ENCODE measurements at regions of chr6 and their contacts with region 1.

Region 1: GRCh38 chr6:156776840-156777576 is at the start of gene ARID1B:
- DNase-seq: peak; percentile 81
- H3K4me3 ChIP-seq: peak within 1 kb of the TSS; percentile 82 to 97 (median 90)
- H3K27ac ChIP-seq: peak within 1 kb of the TSS; percentile 85
- H3K4me1 ChIP-seq: peaks cover 33% of the 10 kb centered on the region
- H3K27me3 ChIP-seq: no peaks in the 10 kb centered on the region
- CTCF ChIP-seq: no peak
- POLR2A ChIP-seq: peak; percentile 46
- total RNA-seq, gene ARID1B: 81.3 and 89.5 TPM in 2 replicates

Region 2: DNA sequence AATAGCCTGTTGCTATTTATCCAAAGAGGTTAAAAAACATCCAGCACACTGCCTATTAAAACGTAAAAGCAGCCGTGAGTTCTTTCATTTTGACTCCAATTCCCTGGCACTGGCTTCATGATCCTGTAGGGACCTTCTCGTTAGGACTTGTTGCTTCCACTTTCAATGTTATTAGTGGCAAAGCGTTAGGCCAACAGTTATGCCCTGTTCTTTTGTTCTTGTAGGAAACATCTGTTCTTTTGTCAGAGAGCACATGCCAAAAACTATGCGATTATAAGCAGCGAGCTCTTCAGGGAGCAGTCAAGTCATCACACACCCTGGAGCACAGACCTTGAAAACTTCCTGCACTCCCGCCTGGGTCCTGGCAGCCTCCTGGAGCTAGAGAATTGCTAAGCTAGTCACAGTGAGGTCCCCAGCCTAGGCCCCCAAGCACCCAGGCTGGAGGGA is 609.4 kb before region 1 on chr6:
- CTCF ChIA-PET with region 1: no interaction called
- POLR2A ChIA-PET with region 1: no interaction called
- dilution Hi-C with region 1: no loop called
- intact Hi-C with region 1: loop called (anchors 10 kb)
- DNase-seq: peak; percentile 98
- H3K4me3 ChIP-seq: peak overlapping the region in 1 of 3 experiments; percentile 18
- H3K27ac ChIP-seq: peak overlapping the region; percentile 68
- H3K4me1 ChIP-seq: peaks cover 17% of the 10 kb centered on the region
- H3K27me3 ChIP-seq: no peaks in the 10 kb centered on the region
- CTCF ChIP-seq: no peak
- POLR2A ChIP-seq: peak; percentile 24

Region 3: DNA sequence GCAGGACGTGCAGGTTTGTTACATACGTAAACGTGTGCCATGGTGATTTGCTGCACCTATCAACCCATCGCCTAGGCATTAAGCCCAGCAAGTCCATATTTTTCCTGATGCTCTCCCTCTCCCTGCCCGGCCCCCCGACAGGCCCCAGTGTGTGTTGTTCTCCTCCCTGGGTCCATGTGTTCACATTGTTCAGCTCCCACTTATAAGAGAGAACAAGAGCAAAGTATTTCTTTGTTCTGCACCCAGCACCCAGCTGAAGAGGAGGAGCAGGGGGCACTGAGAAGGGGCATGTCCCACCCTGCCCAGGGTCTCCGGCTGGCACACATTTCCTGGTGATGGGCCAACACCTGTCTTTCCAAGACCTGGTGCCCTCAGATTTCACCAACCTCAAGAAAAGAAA is 250.9 kb before region 1 on chr6:
- CTCF ChIA-PET with region 1: no interaction called
- POLR2A ChIA-PET with region 1: no interaction called
- dilution Hi-C with region 1: no loop called
- intact Hi-C with region 1: no loop called
- DNase-seq: no peak
- H3K4me3 ChIP-seq: no peak overlapping the region
- H3K27ac ChIP-seq: no peak overlapping the region
- H3K4me1 ChIP-seq: no peaks in the 10 kb centered on the region
- H3K27me3 ChIP-seq: no peaks in the 10 kb centered on the region
- CTCF ChIP-seq: no peak
- POLR2A ChIP-seq: no peak

Region 4: GRCh38 chr6:156686995-156687788 is 89.8 kb before region 1 on chr6:
- CTCF ChIA-PET with region 1: interaction called, 4 read pairs
- POLR2A ChIA-PET with region 1: no interaction called
- dilution Hi-C with region 1: no loop called
- intact Hi-C with region 1: loop called (anchors 1 kb)
- DNase-seq: peak; percentile 85
- H3K4me3 ChIP-seq: peak overlapping the region; percentile 82 to 91 (median 86)
- H3K27ac ChIP-seq: peak overlapping the region; percentile 98
- H3K4me1 ChIP-seq: peaks cover 11% of the 10 kb centered on the region
- H3K27me3 ChIP-seq: peaks cover 5 to 18% of the 10 kb centered on the region in 2 experiments
- CTCF ChIP-seq: no peak
- POLR2A ChIP-seq: peak; percentile 68

Region 5: DNA sequence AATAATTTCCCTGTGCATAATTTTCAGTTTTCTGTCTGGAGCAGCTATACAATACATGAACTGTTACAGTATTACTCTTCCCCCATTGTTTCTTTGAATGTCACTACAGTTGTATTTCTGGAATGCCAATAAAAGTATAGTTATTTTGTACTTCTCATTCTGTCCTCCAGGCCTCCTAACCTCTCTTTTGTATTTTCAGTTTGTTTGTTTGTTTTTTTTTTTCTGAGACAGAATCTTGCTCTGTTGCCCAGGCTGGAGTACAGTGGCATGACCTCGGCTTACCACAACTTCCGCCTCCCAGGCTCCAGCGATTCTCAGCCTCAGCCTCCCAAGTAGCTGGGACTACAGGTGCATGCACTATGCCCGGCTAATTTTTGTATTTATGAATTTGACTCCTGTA is 16.6 kb before region 1 on chr6:
- CTCF ChIA-PET with region 1: no interaction called
- POLR2A ChIA-PET with region 1: no interaction called
- dilution Hi-C with region 1: no loop called
- intact Hi-C with region 1: no loop called
- DNase-seq: no peak
- H3K4me3 ChIP-seq: no peak overlapping the region
- H3K27ac ChIP-seq: no peak overlapping the region
- H3K4me1 ChIP-seq: no peaks in the 10 kb centered on the region
- H3K27me3 ChIP-seq: peaks cover 0 to 4% of the 10 kb centered on the region in 2 experiments
- CTCF ChIP-seq: no peak
- POLR2A ChIP-seq: no peak

Region 6: GRCh38 chr6:156848533-156848932 is 71.5 kb after region 1 on chr6:
- CTCF ChIA-PET with region 1: no interaction called
- POLR2A ChIA-PET with region 1: no interaction called
- dilution Hi-C with region 1: no loop called
- intact Hi-C with region 1: loop called (anchors 5 kb)
- DNase-seq: peak; percentile 83
- H3K4me3 ChIP-seq: no peak overlapping the region
- H3K27ac ChIP-seq: no peak overlapping the region
- H3K4me1 ChIP-seq: peaks cover 23% of the 10 kb centered on the region
- H3K27me3 ChIP-seq: no peaks in the 10 kb centered on the region
- CTCF ChIP-seq: no peak
- POLR2A ChIP-seq: no peak

Region 7: GRCh38 chr6:157089258-157089657 is 312.2 kb after region 1 on chr6:
- CTCF ChIA-PET with region 1: no interaction called
- POLR2A ChIA-PET with region 1: no interaction called
- dilution Hi-C with region 1: no loop called
- intact Hi-C with region 1: loop called (anchors 5 kb)
- DNase-seq: no peak
- H3K4me3 ChIP-seq: no peak overlapping the region
- H3K27ac ChIP-seq: peak overlapping the region; percentile 80
- H3K4me1 ChIP-seq: peaks cover 55% of the 10 kb centered on the region
- H3K27me3 ChIP-seq: no peaks in the 10 kb centered on the region
- CTCF ChIP-seq: no peak
- POLR2A ChIP-seq: no peak

Region 8: GRCh38 chr6:157274471-157275226 is 497.6 kb after region 1 on chr6:
- CTCF ChIA-PET with region 1: no interaction called
- POLR2A ChIA-PET with region 1: no interaction called
- dilution Hi-C with region 1: no loop called
- intact Hi-C with region 1: loop called (anchors 5 kb)
- DNase-seq: peak; percentile 73
- H3K4me3 ChIP-seq: peak overlapping the region; percentile 35 to 43 (median 42)
- H3K27ac ChIP-seq: no peak overlapping the region
- H3K4me1 ChIP-seq: peaks cover 7% of the 10 kb centered on the region
- H3K27me3 ChIP-seq: no peaks in the 10 kb centered on the region
- CTCF ChIP-seq: peak; percentile 54 to 82
- POLR2A ChIP-seq: no peak